GM10248 (cell line): ENCODE measurements at regions of chr12 and their contacts with region 1.

Region 1: GRCh38 chr12:120301962-120302815 is at the start of gene SIRT4:
- DNase-seq: peak; percentile 93
- CTCF ChIP-seq: peak; percentile 72

Region 2: DNA sequence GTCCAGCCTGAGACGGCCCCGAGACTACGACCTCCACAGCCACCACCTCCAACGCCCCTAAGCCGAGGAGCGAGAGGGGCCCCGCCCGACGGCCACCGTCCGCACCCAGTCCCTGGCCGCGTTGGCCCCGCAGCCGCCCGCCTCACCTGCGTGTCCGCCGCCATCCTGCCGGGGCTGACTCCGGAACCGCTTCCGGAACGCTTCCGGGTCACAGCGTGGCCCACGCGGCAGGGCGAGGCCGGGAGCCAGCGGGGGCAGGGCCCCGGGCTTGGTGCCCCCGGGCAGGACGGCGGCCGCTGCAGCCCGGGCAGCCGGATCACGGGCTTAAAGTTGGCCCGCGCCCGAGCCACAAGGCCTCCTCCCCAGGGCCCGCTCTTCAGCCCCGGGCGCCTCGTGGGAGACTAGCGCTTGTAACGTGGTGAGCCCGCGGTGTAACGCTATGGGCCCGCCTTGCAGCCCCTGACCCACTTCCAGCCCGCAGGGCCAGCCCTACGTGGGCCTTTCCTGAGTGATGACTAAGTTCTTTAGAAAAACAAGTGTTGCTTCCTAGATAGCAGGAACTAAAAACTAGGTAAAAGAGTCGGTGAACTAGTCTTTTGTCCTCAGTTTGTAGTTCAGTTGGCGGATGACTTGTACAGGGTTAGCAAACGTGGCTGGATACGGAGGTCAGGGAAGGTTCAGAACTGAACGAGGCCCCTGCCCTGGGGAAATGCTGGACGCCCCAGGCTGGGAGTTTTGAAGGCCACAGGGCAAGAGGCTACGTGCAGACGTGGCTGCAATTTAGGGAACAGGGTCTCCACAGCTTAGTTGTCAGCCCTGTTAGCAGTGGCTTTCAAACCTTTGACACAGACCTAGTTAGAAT is 107.4 kb before region 1 on chr12 and contains the start of gene GCN1:
- CTCF ChIA-PET with region 1: no interaction called
- POLR2A ChIA-PET with region 1: no interaction called
- DNase-seq: peak; percentile 90
- CTCF ChIP-seq: no peak

Region 3: DNA sequence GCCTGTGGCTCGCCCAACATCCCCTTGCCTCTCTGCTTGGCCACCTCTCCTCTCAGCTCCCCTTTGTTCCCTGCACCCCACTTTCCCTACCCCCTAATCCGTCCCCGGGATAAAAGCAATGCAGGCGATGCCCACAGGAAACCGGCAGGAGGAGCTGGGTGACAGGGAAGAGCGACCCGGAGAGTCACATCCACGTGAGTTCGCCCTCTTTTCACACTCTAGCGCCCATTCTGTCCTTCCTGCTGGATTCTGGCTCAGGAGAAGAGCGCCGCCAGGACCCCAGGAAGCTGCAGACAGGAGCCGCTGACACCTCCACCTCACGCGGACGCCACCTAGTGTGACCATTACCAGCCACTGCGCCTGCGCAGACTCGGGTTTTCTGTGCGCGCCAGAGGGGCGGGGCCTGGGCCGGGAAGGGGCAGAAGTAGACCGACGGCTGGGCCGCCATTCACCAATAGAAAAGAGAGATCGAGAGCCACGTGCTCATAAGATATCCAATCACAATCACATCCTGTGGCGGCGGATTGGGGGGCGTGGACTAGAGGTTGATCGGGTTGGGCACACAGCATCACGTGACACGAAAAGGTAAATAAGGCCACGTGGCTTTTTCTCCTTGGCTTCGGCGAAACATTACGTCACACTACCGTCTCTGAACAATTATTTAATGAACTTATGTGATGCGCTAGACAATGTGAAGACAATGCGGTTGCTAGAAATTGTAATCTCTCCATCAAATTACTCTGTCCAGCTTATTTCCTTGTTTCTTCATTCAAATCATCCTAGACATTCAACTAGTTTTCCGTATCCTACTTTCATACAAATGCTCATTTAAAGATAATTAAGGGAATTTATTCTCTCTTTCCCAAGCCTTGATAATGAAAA is 15.3 kb after region 1 on chr12:
- CTCF ChIA-PET with region 1: interaction called, 69 read pairs
- POLR2A ChIA-PET with region 1: no interaction called
- DNase-seq: peak; percentile 99
- CTCF ChIP-seq: peak; percentile 59

Region 4: DNA sequence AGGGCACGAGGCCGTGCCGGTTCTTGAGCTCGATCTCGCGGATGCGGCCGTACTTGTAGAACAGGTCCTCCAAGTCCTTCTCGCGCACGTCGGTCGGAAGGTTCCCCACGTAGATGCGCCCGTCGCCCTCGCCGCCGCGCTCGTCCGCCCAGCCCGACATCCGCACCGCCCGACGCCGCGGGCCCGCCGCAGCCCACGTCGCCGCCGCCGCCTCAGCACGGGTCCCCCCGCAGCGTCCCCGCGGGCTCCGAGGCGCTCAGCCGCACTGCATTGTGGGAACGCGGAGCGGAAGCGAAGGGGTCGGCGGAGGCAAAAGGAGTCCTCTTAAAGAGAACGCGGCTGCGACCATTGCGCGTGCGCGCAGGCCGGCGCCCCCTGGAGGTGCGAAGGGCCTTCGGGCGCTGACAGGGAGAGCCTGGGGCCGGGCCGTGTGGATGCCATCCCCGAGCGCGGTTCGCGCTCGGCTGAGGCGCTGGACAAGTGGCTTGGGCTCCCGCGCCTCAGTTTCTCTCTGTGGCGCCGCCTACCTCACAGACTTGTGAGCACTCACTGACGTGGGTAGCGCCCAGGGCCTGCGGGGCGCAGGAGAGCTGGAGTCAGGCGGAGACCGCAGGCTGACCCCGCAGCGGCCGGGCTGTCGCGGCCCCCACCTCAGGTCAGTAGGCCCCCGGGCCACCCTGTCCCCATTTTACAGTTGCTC is 167.4 kb after region 1 on chr12 and contains the start of gene SRSF9:
- CTCF ChIA-PET with region 1: no interaction called
- POLR2A ChIA-PET with region 1: no interaction called
- DNase-seq: peak; percentile 99
- CTCF ChIP-seq: peak; percentile 92